ENCODE measurements at regions of chr2 and their contacts with region 1.

Region 1: GRCh38 chr2:161954103-161954502 is 119.9 kb downstream of the DPP4 start:
- DNase-seq: no peak
- H3K4me3 Mint-ChIP-seq: no peak overlapping the region
- H3K27ac Mint-ChIP-seq: peak overlapping the region; percentile 83
- H3K4me1 Mint-ChIP-seq: peaks cover 56% of the 10 kb centered on the region
- H3K27me3 Mint-ChIP-seq: no peaks in the 10 kb centered on the region

Region 2: GRCh38 chr2:161166538-161167409 is 787.3 kb before region 1 on chr2:
- CTCF ChIA-PET with region 1: no interaction called
- POLR2A ChIA-PET with region 1: no interaction called
- intact Hi-C with region 1: loop called (anchors 2 kb)
- DNase-seq: peak; percentile 87
- H3K4me3 Mint-ChIP-seq: peak overlapping the region; percentile 34
- H3K27ac Mint-ChIP-seq: peak overlapping the region; percentile 91
- H3K4me1 Mint-ChIP-seq: peaks cover 84% of the 10 kb centered on the region
- H3K27me3 Mint-ChIP-seq: no peaks in the 10 kb centered on the region

Region 3: DNA sequence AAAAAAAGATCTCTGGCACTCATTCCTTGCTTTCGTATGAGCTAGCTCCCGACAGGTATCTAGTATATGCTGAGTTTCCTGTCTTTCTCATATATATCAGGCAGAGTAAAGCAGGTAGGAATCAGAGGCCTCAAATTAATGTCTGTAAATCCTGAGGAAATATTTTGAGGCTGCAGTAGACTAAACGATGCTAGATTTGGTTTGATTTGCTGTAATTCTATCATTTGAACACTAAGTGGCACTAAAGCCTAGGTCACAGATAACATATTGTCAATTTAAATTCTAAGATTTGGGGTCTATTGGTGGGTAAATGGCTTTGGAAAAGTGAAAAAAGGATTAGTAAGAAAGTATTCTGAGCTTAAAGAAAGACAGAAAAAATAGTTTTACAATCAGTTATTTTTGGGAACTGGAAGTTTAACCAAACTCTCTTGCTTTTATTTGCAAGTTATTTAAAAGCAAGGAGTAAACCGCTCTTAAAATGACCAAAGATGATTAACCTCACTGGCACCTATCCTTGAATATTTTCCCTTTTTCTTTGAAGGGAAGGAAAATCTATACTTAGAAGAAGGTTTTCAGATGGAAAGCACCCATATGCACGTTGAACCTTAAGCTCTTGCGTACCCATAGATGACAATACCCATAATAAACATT is 367.5 kb before region 1 on chr2:
- CTCF ChIA-PET with region 1: interaction called, 116 read pairs
- POLR2A ChIA-PET with region 1: no interaction called
- intact Hi-C with region 1: no loop called
- DNase-seq: no peak
- H3K4me3 Mint-ChIP-seq: no peak overlapping the region
- H3K27ac Mint-ChIP-seq: no peak overlapping the region
- H3K4me1 Mint-ChIP-seq: no peaks in the 10 kb centered on the region
- H3K27me3 Mint-ChIP-seq: no peaks in the 10 kb centered on the region

Region 4: DNA sequence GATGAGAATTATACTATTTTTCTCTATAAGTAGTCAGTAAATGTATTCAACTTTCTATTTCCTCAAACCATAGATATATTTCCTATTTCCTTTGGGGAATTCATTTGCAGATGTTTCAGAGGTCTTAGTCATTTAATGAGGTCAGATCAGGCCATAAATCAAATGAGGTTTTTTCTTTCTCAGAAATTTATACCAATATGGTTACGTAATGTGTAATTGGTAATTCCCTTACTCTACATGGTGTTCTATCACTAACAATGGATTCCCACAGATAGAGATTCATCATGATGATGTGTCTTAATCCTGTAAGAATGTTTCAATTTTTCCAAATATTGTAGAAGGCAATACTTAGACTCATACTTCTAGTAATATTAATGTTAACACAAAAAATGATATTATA is 11.9 kb after region 1 on chr2:
- CTCF ChIA-PET with region 1: interaction called, 8 read pairs
- POLR2A ChIA-PET with region 1: interaction called, 10 read pairs
- intact Hi-C with region 1: loop called (anchors 1 kb)
- DNase-seq: no peak
- H3K4me3 Mint-ChIP-seq: no peak overlapping the region
- H3K27ac Mint-ChIP-seq: peak overlapping the region; percentile 28
- H3K4me1 Mint-ChIP-seq: peaks cover 28% of the 10 kb centered on the region
- H3K27me3 Mint-ChIP-seq: peaks cover 1% of the 10 kb centered on the region

Region 5: GRCh38 chr2:162058973-162059668 is 105.0 kb after region 1 on chr2:
- CTCF ChIA-PET with region 1: no interaction called
- POLR2A ChIA-PET with region 1: interaction called, 3 read pairs
- intact Hi-C with region 1: loop called (anchors 1 kb)
- DNase-seq: peak; percentile 33
- H3K4me3 Mint-ChIP-seq: peak overlapping the region; percentile 54
- H3K27ac Mint-ChIP-seq: peak overlapping the region; percentile 93
- H3K4me1 Mint-ChIP-seq: peaks cover 82% of the 10 kb centered on the region
- H3K27me3 Mint-ChIP-seq: no peaks in the 10 kb centered on the region

Measured in activated CD4-positive, alpha-beta memory T cell treated with anti-CD3 and anti-CD28 coated beads for 36 hours (primary cell).